Activated B cell treated with CpG ODN at 0.5 μM for 24 hours (primary cell): ENCODE measurements at regions of chr12 and their contacts with region 1.

Region 1: DNA sequence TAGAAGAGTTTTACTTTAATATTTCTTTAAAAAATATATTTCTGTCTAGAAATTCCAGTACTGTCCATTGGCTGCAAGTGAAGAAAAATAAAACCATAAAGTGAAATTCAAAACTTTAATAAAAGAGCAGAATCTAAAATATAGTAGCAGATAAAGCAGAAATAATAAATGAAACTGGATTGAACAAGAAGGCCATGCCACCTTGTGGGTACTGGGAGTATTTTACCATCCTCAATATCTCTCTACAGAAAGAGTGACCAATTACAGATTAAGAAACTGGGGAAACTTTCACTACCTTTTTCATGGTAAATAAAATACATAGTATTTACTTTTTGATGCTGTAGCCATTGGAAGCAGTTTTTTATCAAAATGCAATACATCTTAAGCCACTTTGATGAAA is 220.5 kb downstream of the BCAT1 start:
- DNase-seq: no peak
- ATAC-seq: peak; percentile 26
- H3K4me3 Mint-ChIP-seq: no peak overlapping the region
- H3K27ac Mint-ChIP-seq: peak overlapping the region; percentile 85
- H3K4me1 Mint-ChIP-seq: peaks cover 98% of the 10 kb centered on the region
- H3K27me3 Mint-ChIP-seq: no peaks in the 10 kb centered on the region
- CTCF ChIP-seq: no peak

Region 2: GRCh38 chr12:23204933-23205778 is 1523.2 kb before region 1 on chr12:
- CTCF ChIA-PET with region 1: interaction called, 3 read pairs
- POLR2A ChIA-PET with region 1: no interaction called
- intact Hi-C with region 1: loop called (anchors 1 kb)
- DNase-seq: no peak
- ATAC-seq: peak; percentile 92
- H3K4me3 Mint-ChIP-seq: no peak overlapping the region
- H3K27ac Mint-ChIP-seq: no peak overlapping the region
- H3K4me1 Mint-ChIP-seq: no peaks in the 10 kb centered on the region
- H3K27me3 Mint-ChIP-seq: peaks cover 5% of the 10 kb centered on the region
- CTCF ChIP-seq: peak; percentile 68

Region 3: DNA sequence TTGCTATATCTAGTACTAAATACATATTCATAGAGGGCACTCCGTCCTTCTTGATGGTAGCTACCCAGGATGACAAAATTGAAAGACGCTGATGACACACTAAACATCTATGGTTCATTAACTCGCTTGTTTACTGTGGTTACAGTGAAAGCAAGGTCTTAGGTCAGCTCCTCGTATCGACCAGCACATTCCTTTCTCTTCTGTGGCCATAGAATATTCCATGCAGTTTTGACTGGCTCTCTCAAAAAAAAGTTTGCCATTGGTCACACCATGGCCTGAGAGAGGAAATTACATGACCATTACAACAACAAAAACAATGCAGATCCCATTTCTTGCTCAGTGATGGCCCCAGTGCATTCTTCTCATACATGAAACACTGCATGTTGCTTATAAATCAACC is 367.5 kb before region 1 on chr12:
- CTCF ChIA-PET with region 1: interaction called, 3 read pairs
- POLR2A ChIA-PET with region 1: interaction called, 10 read pairs
- intact Hi-C with region 1: loop called (anchors 1 kb)
- DNase-seq: no peak
- ATAC-seq: peak; percentile 53
- H3K4me3 Mint-ChIP-seq: peak overlapping the region; percentile 69
- H3K27ac Mint-ChIP-seq: peak overlapping the region; percentile 76
- H3K4me1 Mint-ChIP-seq: peaks cover 65% of the 10 kb centered on the region
- H3K27me3 Mint-ChIP-seq: no peaks in the 10 kb centered on the region
- CTCF ChIP-seq: no peak

Region 4: DNA sequence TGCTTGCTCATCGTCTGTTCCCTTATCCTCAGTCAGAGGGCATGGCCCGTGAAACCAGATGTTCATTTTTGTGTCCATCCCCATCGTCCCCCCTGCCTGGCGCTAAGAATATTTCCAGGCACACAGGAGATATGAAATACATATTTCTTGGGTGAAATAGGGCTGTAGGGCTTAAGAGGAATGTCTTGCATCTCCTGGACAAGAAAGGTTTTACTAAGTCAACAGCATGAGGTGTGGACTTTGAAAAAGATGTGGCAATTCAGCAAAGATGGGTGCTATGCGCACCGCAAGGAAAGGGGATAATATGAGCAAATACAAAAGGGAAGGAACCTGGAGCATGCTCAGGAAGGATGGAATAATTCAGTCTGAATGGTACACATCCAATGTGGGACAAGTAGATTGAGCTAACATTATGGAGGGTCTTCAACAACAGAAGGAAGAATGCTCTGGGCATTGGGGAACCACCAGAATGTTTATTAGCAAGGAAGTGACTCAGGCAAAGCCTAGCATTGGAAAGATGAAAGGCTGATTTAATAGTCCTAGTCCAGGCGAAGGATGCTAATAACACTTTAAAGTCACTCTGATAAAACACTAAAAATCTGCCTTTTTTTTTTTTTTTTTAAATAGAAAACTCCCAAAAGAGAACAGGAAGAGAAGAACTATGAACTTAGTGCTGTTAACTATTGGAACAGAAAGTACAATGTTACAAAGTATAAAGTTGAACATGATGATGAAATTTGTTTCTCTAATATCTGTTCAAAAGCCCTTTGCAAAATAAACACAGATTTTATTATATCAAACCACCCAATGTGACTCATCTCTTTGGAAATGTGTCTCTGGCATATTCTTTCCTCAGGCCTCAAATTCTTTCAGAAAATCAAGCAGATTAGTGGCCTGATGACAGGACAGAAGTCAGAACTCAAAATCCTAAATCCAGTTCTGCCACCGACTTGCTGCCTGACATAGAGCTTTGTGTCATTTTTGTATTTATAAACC is 228.9 kb before region 1 on chr12:
- CTCF ChIA-PET with region 1: no interaction called
- POLR2A ChIA-PET with region 1: no interaction called
- intact Hi-C with region 1: loop called (anchors 5 kb)
- DNase-seq: no peak
- ATAC-seq: no peak
- H3K4me3 Mint-ChIP-seq: no peak overlapping the region
- H3K27ac Mint-ChIP-seq: no peak overlapping the region
- H3K4me1 Mint-ChIP-seq: no peaks in the 10 kb centered on the region
- H3K27me3 Mint-ChIP-seq: no peaks in the 10 kb centered on the region
- CTCF ChIP-seq: no peak

Region 5: GRCh38 chr12:24537083-24537860 is 191.1 kb before region 1 on chr12:
- CTCF ChIA-PET with region 1: no interaction called
- POLR2A ChIA-PET with region 1: no interaction called
- intact Hi-C with region 1: no loop called
- DNase-seq: no peak
- ATAC-seq: no peak
- H3K4me3 Mint-ChIP-seq: no peak overlapping the region
- H3K27ac Mint-ChIP-seq: no peak overlapping the region
- H3K4me1 Mint-ChIP-seq: peaks cover 16% of the 10 kb centered on the region
- H3K27me3 Mint-ChIP-seq: no peaks in the 10 kb centered on the region
- CTCF ChIP-seq: no peak

Region 6: DNA sequence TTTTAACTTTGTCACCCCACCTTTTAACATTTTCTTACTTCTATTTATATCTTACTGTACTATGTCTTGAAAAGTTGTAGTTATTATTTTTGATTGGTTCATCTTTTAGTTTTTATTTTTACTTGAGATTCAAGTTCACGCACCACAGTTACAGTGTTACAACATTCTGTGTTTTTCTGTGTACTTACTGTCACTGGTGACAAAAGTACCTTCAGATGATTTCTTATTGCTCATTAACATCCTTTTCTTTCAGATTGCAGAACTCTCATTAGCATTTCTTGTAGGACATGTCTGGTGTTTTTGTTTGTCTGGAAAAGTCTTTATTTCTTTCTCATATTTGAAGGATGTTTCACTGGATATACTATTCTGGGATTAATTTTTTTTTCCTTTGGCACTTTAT is 69.3 kb before region 1 on chr12:
- CTCF ChIA-PET with region 1: no interaction called
- POLR2A ChIA-PET with region 1: no interaction called
- intact Hi-C with region 1: loop called (anchors 5 kb)
- DNase-seq: no peak
- ATAC-seq: no peak
- H3K4me3 Mint-ChIP-seq: no peak overlapping the region
- H3K27ac Mint-ChIP-seq: no peak overlapping the region
- H3K4me1 Mint-ChIP-seq: no peaks in the 10 kb centered on the region
- H3K27me3 Mint-ChIP-seq: no peaks in the 10 kb centered on the region
- CTCF ChIP-seq: no peak

Region 7: DNA sequence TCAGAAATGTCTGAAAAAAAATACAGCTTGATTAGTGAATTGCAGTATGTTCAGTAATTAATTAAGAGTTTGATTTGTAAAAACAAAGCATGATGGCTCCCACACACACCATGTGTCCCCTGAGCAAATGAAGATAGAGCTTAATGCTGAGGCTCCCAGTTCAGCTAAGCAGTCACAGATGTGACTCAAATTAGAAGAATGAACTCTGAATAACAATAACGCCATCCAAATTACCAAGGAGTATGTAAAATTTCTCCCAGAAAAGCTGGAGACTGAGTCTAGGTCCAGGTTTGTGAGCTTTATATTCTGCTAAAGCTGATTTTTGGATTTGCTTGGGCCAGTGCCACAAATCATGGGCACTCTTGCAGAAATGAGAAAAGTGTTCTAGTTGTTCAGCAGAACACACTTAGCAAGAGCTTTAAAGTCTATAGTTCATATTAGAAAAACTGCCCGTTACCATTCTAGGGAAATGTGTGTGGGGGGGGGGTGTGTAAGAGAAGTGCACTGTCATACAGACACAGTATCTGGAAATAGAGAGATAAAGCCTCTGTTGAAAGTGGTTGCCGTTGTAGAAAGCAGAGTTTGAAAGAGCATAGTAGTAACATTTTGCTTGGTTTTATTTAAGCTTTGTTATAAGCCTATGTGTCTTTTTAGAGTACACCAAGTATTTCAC is 32.6 kb before region 1 on chr12:
- CTCF ChIA-PET with region 1: no interaction called
- POLR2A ChIA-PET with region 1: no interaction called
- intact Hi-C with region 1: no loop called
- DNase-seq: no peak
- ATAC-seq: no peak
- H3K4me3 Mint-ChIP-seq: no peak overlapping the region
- H3K27ac Mint-ChIP-seq: no peak overlapping the region
- H3K4me1 Mint-ChIP-seq: peaks cover 4% of the 10 kb centered on the region
- H3K27me3 Mint-ChIP-seq: no peaks in the 10 kb centered on the region
- CTCF ChIP-seq: no peak

Region 8: DNA sequence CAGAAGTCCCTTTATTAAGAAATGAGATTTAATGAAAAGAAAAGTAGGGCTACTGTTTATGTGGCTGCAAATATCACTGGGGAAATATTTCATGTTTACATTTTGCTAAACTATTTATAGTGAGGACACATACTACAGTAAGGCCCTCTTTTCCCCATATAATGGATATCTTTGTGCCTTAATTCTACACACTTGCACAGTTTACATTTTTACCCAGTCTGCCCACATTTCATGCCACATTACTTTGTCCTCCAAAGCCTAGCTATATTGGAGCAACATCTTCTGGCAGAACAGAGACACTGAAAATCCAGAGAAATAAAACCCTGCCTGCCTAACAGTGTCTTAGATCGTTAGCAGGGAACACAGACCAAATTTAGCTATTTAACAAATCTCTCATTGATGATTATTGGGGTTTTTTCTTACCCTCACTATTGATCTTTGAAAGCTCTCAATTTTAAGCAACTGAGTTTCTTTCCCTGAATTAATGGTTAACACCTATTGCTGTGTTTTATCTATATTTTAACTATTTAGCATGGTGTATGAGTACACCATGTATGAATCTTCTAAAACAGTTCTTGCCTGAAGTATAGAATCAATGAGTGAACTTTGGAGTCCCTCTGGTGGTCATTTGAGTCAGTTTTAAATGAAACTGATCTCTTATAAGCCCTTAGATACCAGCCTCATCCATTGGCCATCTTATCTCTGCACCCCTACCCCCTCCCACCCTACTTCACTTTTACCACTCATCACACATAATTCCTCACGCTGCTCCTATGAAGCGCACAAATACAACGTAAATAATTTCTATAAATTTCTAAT is 50.3 kb after region 1 on chr12:
- CTCF ChIA-PET with region 1: interaction called, 33 read pairs
- POLR2A ChIA-PET with region 1: interaction called, 41 read pairs
- intact Hi-C with region 1: loop called (anchors 1 kb)
- DNase-seq: no peak
- ATAC-seq: peak; percentile 95
- H3K4me3 Mint-ChIP-seq: no peak overlapping the region
- H3K27ac Mint-ChIP-seq: peak overlapping the region; percentile 50
- H3K4me1 Mint-ChIP-seq: peaks cover 34% of the 10 kb centered on the region
- H3K27me3 Mint-ChIP-seq: no peaks in the 10 kb centered on the region
- CTCF ChIP-seq: peak; percentile 61